Activated naive CD4-positive, alpha-beta T cell treated with anti-CD3 and anti-CD28 coated beads for 36 hours (primary cell): ENCODE measurements at regions of chr6 and their contacts with region 1.

Region 1: GRCh38 chr6:53725791-53726431 is 60.4 kb upstream of the KLHL31 start:
- DNase-seq: peak; percentile 83
- H3K4me3 Mint-ChIP-seq: no peak overlapping the region
- H3K27ac Mint-ChIP-seq: no peak overlapping the region
- H3K4me1 Mint-ChIP-seq: peaks cover 5% of the 10 kb centered on the region
- H3K27me3 Mint-ChIP-seq: peaks cover 11% of the 10 kb centered on the region

Region 2: DNA sequence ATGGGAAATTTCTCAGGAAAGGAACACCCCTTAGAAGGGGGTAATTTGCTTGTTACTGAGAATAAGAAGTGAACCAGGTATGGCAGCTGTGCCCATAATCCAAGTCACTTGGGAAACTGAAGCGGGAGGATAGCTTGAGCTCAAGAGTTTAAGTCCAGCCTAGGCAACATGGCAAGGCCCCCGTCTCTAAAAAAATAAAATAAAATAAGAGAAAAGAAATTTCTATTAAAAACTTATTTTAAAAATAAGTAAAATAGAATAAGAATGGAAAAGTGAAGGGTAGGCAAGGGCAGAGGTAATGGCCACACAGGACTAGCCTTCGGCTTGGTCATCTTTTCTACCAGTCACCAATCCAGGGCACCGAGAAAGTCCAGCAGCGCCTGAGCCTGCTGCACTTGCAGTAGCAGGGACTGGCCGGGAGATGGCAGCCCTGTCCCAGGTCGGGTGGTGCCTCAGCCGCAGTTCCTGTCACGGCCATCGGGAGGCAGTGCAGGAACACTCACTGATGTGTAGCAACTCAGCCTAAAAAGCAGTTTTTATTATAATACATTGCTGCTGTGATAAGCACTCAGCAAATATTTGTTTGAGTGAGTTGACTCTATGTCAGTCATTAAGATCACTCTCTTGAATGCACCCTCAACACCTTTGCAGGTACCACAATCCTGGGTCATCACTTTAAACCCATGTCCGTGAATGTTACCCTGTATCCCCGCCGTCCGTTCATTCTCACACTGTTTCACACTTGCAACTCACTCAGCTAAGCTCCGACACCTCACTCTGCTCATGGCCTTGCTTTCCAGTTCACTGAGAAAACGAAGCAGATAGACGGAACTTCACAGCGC is 554.1 kb before region 1 on chr6:
- CTCF ChIA-PET with region 1: interaction called, 18 read pairs
- intact Hi-C with region 1: loop called (anchors 1 kb)
- DNase-seq: peak; percentile 93
- H3K4me3 Mint-ChIP-seq: no peak overlapping the region
- H3K27ac Mint-ChIP-seq: no peak overlapping the region
- H3K4me1 Mint-ChIP-seq: no peaks in the 10 kb centered on the region
- H3K27me3 Mint-ChIP-seq: no peaks in the 10 kb centered on the region

Region 3: GRCh38 chr6:53492860-53493634 is 232.9 kb before region 1 on chr6:
- CTCF ChIA-PET with region 1: interaction called, 89 read pairs
- intact Hi-C with region 1: loop called (anchors 1 kb)
- DNase-seq: peak; percentile 45
- H3K4me3 Mint-ChIP-seq: no peak overlapping the region
- H3K27ac Mint-ChIP-seq: no peak overlapping the region
- H3K4me1 Mint-ChIP-seq: peaks cover 10% of the 10 kb centered on the region
- H3K27me3 Mint-ChIP-seq: peaks cover 16% of the 10 kb centered on the region

Region 4: GRCh38 chr6:53651764-53652401 is 74.0 kb before region 1 on chr6:
- CTCF ChIA-PET with region 1: interaction called, 14 read pairs
- intact Hi-C with region 1: loop called (anchors 1 kb)
- DNase-seq: peak; percentile 81
- H3K4me3 Mint-ChIP-seq: peak overlapping the region; percentile 85
- H3K27ac Mint-ChIP-seq: peak overlapping the region; percentile 46
- H3K4me1 Mint-ChIP-seq: peaks cover 26% of the 10 kb centered on the region
- H3K27me3 Mint-ChIP-seq: no peaks in the 10 kb centered on the region

Region 5: GRCh38 chr6:53707108-53707897 is 18.6 kb before region 1 on chr6:
- CTCF ChIA-PET with region 1: interaction called, 42 read pairs
- intact Hi-C with region 1: no loop called
- DNase-seq: no peak
- H3K4me3 Mint-ChIP-seq: no peak overlapping the region
- H3K27ac Mint-ChIP-seq: no peak overlapping the region
- H3K4me1 Mint-ChIP-seq: no peaks in the 10 kb centered on the region
- H3K27me3 Mint-ChIP-seq: peaks cover 7% of the 10 kb centered on the region

Region 6: GRCh38 chr6:53752856-53753255 is 26.9 kb after region 1 on chr6:
- CTCF ChIA-PET with region 1: no interaction called
- intact Hi-C with region 1: no loop called
- DNase-seq: no peak
- H3K4me3 Mint-ChIP-seq: no peak overlapping the region
- H3K27ac Mint-ChIP-seq: no peak overlapping the region
- H3K4me1 Mint-ChIP-seq: no peaks in the 10 kb centered on the region
- H3K27me3 Mint-ChIP-seq: no peaks in the 10 kb centered on the region

Region 7: DNA sequence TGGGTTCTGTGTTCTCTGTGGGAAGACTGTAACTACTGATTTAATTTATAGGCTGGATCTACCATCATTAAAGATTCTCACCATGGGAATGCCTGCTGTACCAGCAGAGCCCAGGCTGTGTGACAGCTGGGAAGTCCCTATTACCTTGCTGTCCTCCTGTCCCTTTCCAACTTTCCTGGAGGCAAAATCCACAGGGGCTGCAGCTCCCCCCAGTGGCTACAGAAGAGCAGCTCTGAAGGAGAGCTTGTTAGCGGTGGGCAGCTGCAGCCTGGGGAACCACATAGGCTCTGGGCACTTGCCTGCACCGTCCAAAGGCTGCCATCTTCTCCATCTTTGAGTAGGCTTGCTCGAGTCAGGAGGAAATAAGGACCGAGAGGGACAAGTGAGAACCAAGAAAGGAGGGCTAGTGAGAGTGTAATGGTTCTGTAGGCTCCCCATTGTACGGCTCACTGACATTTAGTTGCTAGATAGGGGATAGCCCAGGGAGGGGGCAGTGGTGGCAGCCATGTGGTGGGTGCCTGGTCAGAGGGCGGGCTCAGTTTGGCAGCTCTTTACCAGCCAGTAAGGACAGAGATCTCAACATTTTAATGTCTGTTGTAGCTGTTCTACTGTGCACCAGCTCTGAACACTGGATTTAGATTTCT is 230.3 kb after region 1 on chr6:
- CTCF ChIA-PET with region 1: interaction called, 8 read pairs
- intact Hi-C with region 1: loop called (anchors 5 kb)
- DNase-seq: peak; percentile 46
- H3K4me3 Mint-ChIP-seq: no peak overlapping the region
- H3K27ac Mint-ChIP-seq: no peak overlapping the region
- H3K4me1 Mint-ChIP-seq: no peaks in the 10 kb centered on the region
- H3K27me3 Mint-ChIP-seq: peaks cover 2% of the 10 kb centered on the region